ENCODE measurements at regions of chr9 and their contacts with region 1.

Region 1: DNA sequence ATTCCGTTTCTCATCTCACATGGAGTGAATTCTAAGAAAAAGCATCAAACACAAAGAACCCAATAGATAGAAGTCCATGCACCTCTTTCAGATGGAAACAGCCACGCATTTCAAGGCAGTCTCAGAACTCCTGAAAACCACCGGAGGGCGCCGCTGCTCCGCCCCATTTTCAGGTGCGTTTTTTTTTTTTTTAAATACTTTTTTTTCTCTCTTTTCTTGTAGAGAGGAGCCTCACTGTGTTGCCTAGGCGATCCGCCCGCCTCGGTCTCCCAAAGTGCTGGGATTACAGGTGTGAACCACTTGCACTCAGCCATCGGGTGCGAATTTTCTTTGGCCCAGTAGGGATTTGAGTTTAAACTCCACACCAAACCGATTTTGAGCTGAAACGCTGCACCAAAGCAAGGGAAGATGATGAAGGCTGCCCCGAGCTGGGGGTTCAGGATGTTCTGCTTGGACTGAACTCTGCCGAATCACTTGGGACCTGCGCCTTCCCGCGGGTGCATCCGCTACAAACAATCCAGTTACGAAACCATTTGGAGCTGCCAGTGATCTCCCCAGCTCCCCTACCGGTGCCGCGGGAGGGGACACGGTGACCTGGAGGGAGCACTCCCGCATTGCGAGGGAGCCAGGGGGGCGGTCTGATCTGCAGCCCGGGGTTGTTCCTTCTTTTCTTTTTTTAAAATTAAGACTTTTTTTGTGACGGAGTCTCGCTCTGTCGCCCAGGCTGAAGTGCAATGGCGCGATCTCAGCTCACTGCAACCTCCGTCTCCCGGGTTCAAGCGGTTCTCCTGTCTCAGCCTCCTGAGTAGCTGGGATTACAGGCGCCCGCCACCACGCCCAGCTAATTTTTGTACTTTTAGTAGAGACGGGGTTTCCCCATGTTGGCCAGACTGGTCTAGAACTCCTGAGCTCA is 1.4 kb downstream of the PTGR1 start:
- DNase-seq: peak; percentile 81
- H3K4me3 ChIP-seq: peak overlapping the region; percentile 72 to 91 (median 90)
- H3K27ac ChIP-seq: peak overlapping the region; percentile 87
- H3K4me1 ChIP-seq: peaks cover 36% of the 10 kb centered on the region
- H3K27me3 ChIP-seq: no peaks in the 10 kb centered on the region
- CTCF ChIP-seq: peak; percentile 68 to 72
- POLR2A ChIP-seq: no peak

Region 2: DNA sequence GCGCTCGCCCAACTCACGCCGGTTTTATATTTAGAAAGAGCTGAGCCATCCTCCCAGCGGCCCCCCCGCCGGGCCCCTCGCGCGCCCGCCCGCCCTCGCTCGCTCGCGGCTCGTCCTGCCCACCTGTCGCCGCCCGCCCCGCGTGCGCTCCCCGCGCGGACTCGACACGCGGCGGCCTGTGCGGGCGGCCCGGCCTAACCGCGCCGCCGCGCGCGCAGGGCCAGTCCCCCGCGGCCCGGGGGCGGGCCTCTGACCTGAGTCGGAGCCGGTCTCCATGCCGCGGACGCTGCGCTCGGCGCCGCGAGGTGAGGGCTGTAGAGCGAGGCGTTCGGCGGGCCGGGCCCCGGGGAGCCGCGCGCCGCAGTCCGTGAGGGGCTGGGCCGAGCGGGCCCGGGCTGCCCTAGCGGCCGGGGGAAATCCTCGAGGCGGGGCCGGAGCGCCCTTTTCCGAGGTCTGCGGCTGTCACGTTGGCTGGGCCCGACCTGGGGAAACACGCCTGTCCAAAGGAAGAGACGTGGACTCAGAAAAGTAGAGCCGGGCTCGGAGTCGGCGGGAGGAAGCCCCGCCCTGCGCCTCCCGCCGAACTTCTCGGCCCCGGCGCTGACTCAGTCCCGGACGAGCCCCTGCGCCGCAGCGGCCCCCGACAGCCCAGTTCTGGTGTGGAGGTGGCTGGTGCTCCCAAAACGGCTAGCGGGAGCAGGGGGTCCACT is 114.1 kb before region 1 on chr9 and contains the start of gene ECPAS:
- CTCF ChIA-PET with region 1: no interaction called
- POLR2A ChIA-PET with region 1: no interaction called
- dilution Hi-C with region 1: no loop called
- intact Hi-C with region 1: loop called (anchors 5 kb)
- DNase-seq: peak; percentile 81
- H3K4me3 ChIP-seq: peak within 1 kb of the TSS; percentile 49 to 78 (median 75)
- H3K27ac ChIP-seq: peak within 1 kb of the TSS; percentile 70
- H3K4me1 ChIP-seq: peaks cover 8% of the 10 kb centered on the region
- H3K27me3 ChIP-seq: no peaks in the 10 kb centered on the region
- CTCF ChIP-seq: peak in 1 of 2 donors; percentile 3
- POLR2A ChIP-seq: no peak
- total RNA-seq, gene ECPAS: 72.3 and 89.3 TPM in 2 replicates

Region 3: DNA sequence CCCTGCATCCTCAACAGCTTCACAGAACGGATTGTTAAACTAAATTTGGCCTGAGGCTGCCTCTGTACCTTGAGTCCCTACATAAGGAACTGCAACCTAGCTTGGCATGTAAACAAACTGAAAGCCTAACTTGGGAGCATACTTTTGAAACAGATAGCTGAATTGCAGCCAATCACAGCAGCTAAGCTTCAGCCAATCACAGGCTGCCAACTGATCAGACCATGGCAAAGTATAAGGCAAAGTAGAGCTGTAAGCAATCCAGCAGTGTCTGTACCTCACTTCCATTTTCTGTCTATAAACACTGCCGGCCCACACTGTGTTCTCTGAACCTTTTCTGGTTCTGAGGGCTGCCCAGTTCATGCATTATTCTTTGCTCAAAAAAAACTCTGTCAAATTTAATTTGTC is 82.0 kb before region 1 on chr9:
- CTCF ChIA-PET with region 1: no interaction called
- POLR2A ChIA-PET with region 1: no interaction called
- dilution Hi-C with region 1: no loop called
- intact Hi-C with region 1: no loop called
- DNase-seq: no peak
- H3K4me3 ChIP-seq: no peak overlapping the region
- H3K27ac ChIP-seq: no peak overlapping the region
- H3K4me1 ChIP-seq: no peaks in the 10 kb centered on the region
- H3K27me3 ChIP-seq: peaks cover 0 to 2% of the 10 kb centered on the region in 2 experiments
- CTCF ChIP-seq: no peak
- POLR2A ChIP-seq: no peak

Region 4: DNA sequence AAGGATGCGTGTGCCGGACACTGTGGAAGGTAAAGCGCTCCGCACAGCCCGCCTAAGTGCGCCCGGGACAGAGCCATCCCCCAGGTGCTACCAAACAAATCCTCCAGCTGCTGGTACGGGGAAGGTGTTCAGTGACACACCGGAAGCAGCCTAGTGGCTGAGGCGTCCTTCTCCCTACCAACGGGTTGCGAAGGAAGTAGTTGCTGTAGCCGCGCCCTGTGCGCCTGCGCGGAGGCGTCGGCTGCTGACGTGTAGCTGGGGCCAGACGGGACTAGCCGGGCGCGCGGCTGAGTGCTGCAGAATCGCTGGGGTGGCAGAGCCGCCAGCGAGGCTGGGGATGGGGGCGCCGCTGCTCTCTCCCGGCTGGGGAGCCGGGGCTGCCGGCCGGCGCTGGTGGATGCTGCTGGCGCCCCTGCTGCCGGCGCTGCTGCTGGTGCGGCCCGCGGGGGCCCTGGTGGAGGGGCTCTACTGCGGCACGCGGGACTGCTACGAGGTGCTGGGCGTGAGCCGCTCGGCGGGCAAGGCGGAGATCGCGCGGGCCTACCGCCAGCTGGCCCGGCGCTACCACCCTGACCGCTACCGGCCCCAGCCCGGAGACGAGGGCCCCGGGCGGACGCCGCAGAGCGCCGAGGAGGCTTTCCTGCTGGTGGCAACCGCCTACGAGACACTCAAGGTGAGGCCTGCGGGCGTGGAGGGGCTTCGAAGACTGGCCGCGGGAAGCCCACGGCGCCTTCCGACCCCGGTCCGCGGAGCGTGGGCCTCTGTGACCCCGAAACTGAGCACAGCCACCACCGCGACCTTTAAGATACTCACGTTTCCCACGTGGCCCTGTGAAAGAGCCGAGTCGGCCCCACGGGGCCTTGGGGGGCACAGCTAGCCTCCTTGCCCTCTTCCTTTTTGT is 33.2 kb after region 1 on chr9 and contains the start of gene DNAJC25:
- CTCF ChIA-PET with region 1: interaction called, 20 read pairs
- POLR2A ChIA-PET with region 1: interaction called, 18 read pairs
- dilution Hi-C with region 1: no loop called
- intact Hi-C with region 1: loop called (anchors 1 kb)
- DNase-seq: peak; percentile 97
- H3K4me3 ChIP-seq: peak within 1 kb of the TSS; percentile 88 to 98 (median 90)
- H3K27ac ChIP-seq: peak within 1 kb of the TSS; percentile 73
- H3K4me1 ChIP-seq: peaks cover 31% of the 10 kb centered on the region
- H3K27me3 ChIP-seq: no peaks in the 10 kb centered on the region
- CTCF ChIP-seq: no peak
- POLR2A ChIP-seq: peak; percentile 100
- total RNA-seq, gene DNAJC25: 5.2 and 5.5 TPM in 2 replicates

Region 5: GRCh38 chr9:111691672-111692329 is 93.7 kb after region 1 on chr9:
- CTCF ChIA-PET with region 1: interaction called, 35 read pairs
- POLR2A ChIA-PET with region 1: no interaction called
- dilution Hi-C with region 1: no loop called
- intact Hi-C with region 1: loop called (anchors 1 kb)
- DNase-seq: peak; percentile 61
- H3K4me3 ChIP-seq: no peak overlapping the region
- H3K27ac ChIP-seq: no peak overlapping the region
- H3K4me1 ChIP-seq: no peaks in the 10 kb centered on the region
- H3K27me3 ChIP-seq: no peaks in the 10 kb centered on the region
- CTCF ChIP-seq: peak; percentile 19 to 26
- POLR2A ChIP-seq: no peak

Region 6: DNA sequence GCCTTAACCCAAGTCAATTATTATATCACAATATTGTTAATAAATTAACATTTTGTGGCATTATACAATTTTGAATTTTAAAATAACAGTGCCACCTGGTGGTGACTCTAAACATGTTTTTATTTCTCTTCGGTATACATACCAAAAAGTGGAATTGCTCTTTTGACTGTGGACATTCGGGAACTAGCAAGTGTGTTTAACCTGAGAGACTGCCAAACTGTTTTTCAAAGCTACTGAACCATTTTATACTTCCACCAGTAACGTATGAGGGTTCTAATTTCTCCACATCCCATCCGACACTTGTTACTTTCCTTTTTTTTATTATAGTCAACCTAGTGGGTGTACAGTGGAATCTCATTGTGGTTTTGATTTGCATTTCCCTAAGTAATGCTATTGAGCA is 763.5 kb after region 1 on chr9:
- CTCF ChIA-PET with region 1: no interaction called
- POLR2A ChIA-PET with region 1: no interaction called
- dilution Hi-C with region 1: no loop called
- intact Hi-C with region 1: loop called (anchors 10 kb)
- DNase-seq: peak; percentile 55
- H3K4me3 ChIP-seq: no peak overlapping the region
- H3K27ac ChIP-seq: no peak overlapping the region
- H3K4me1 ChIP-seq: peaks cover 4% of the 10 kb centered on the region
- H3K27me3 ChIP-seq: no peaks in the 10 kb centered on the region
- CTCF ChIP-seq: peak in 1 of 2 donors; percentile 10
- POLR2A ChIP-seq: no peak

Measured in endothelial cell of umbilical vein (primary cell).